Activated T-helper 1 cell treated with anti-CD3 and anti-CD28 coated beads, Interleukin-12 subunit alpha, Interleukin-12 subunit beta, Interleukin-2, Interleukin-4 antibody, amounts not matched to agents 30 ng/mL and 10 ng/mL and 1 ng/mL, durations not matched to agents 14 hours and 24 hours and 36 hours (primary cell): ENCODE measurements at regions of chr4 and their contacts with region 1.

Region 1: DNA sequence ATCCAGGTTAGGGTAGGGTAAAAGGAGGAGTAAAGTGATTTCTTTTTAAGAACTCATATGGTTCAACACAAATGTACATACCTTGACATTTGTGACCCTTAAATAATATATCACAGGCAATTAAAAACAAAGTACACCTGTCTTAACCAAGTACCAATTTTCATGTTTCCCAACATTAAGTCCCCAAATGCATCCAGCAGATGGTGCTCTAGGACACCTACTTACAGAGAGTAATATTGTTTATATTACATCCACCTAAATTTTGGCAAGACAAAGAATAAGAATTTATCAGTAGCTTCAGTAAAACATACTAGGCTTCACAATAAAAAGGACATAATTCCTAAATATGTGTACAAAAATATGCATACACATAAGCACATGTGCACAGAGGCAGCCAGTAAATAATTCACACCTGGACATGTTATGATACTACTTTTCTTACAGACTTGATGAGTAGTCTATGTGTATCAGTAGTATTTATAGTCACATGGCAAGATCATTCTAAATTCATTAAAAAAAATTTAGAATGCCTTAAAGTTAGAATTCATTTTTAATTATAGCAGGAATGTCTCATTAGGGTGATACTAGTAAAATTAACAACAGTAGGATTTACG is 219.7 kb downstream of the DCLK2 start:
- DNase-seq: no peak
- H3K4me3 Mint-ChIP-seq: no peak overlapping the region
- H3K27ac Mint-ChIP-seq: no peak overlapping the region
- H3K4me1 Mint-ChIP-seq: peaks cover 18% of the 10 kb centered on the region
- H3K27me3 Mint-ChIP-seq: no peaks in the 10 kb centered on the region

Region 2: DNA sequence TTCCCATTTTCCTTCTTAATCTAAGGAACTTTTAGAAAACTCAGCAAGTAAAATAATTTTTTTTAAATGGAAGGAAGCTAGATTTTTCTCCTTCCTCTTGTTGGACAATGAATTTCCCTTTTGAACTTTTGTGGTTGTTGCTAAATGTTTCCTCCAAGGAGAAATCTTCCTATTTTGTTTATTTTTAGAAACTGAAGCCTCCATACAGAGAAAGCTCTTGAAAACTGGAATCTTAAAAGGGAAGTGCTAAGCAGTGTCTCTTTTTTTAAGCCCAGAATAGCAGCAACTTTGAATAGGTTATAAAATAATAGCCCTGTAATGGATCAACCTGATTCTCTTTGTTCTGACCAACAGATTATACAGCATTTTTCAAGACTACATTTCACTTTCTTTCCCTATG is 234.8 kb before region 1 on chr4:
- intact Hi-C with region 1: no loop called
- DNase-seq: no peak
- H3K4me3 Mint-ChIP-seq: no peak overlapping the region
- H3K27ac Mint-ChIP-seq: no peak overlapping the region
- H3K4me1 Mint-ChIP-seq: no peaks in the 10 kb centered on the region
- H3K27me3 Mint-ChIP-seq: peaks cover 7% of the 10 kb centered on the region

Region 3: DNA sequence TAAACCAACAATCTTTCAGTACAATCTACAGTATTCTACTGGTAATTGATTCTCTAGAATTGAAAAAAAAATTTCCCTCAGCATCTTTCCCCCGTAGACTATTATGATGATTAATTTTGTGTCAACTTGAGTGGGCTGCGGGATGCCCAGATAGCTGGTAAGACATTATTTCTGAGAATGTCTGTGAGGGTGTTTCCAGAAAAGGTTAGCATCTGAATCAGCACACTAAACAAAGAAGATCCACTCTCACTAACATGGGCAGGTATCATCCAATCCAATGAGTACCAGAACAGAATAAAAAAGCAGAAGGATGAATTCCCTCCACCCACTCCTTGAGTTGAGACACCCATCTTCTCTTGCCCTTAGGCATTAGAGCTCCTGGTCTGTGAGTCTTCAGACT is 97.9 kb after region 1 on chr4:
- intact Hi-C with region 1: loop called (anchors 1 kb)
- DNase-seq: no peak
- H3K4me3 Mint-ChIP-seq: no peak overlapping the region
- H3K27ac Mint-ChIP-seq: peak overlapping the region; percentile 87
- H3K4me1 Mint-ChIP-seq: peaks cover 15% of the 10 kb centered on the region
- H3K27me3 Mint-ChIP-seq: no peaks in the 10 kb centered on the region

Region 4: GRCh38 chr4:150493851-150494250 is 195.9 kb after region 1 on chr4:
- intact Hi-C with region 1: loop called (anchors 5 kb)
- DNase-seq: no peak
- H3K4me3 Mint-ChIP-seq: no peak overlapping the region
- H3K27ac Mint-ChIP-seq: no peak overlapping the region
- H3K4me1 Mint-ChIP-seq: no peaks in the 10 kb centered on the region
- H3K27me3 Mint-ChIP-seq: no peaks in the 10 kb centered on the region

Region 5: DNA sequence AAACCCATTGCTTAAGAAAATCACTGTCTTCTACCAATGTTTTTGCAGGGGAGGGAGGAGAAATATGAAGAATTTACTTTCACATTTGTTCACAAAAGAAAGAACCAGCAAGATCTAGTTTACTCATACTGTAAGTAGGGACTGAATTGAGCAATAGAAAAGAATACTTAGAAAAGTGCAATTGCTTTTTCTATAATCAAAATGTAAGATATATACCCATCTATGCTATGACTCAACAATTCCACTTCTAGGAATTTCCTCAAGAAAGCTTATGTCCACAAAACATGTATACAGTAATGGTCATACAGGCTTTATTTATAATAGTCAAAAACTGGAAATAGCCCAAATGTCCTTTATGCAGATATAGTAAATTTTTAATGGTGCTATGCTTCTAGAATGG is 520.7 kb after region 1 on chr4:
- intact Hi-C with region 1: loop called (anchors 2 kb)
- DNase-seq: no peak
- H3K4me3 Mint-ChIP-seq: no peak overlapping the region
- H3K27ac Mint-ChIP-seq: no peak overlapping the region
- H3K4me1 Mint-ChIP-seq: peaks cover 18% of the 10 kb centered on the region
- H3K27me3 Mint-ChIP-seq: no peaks in the 10 kb centered on the region

Region 6: DNA sequence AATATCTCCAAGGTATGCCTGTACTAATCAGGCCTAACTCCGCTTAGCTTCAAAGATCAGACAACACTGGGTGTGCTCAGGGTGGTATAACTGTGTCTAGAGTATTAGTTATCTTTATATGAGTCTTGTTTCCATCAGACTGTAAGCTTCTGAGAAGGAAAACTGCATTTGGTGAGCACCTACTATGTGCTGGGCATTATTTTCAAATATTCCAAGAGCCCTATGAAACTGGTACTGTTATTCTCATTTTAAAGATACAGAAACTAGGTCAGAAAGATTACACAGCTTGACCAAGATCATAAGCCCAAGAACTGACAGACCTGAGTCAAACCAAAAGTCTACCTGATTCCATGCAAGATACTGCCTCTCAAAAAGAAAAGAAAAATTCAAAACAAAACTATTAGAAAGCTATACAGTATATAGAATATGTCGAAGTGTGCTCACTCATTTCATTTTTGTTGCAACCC is 672.8 kb after region 1 on chr4:
- intact Hi-C with region 1: loop called (anchors 5 kb)
- DNase-seq: no peak
- H3K4me3 Mint-ChIP-seq: no peak overlapping the region
- H3K27ac Mint-ChIP-seq: peak overlapping the region; percentile 1
- H3K4me1 Mint-ChIP-seq: peaks cover 45% of the 10 kb centered on the region
- H3K27me3 Mint-ChIP-seq: no peaks in the 10 kb centered on the region

Region 7: DNA sequence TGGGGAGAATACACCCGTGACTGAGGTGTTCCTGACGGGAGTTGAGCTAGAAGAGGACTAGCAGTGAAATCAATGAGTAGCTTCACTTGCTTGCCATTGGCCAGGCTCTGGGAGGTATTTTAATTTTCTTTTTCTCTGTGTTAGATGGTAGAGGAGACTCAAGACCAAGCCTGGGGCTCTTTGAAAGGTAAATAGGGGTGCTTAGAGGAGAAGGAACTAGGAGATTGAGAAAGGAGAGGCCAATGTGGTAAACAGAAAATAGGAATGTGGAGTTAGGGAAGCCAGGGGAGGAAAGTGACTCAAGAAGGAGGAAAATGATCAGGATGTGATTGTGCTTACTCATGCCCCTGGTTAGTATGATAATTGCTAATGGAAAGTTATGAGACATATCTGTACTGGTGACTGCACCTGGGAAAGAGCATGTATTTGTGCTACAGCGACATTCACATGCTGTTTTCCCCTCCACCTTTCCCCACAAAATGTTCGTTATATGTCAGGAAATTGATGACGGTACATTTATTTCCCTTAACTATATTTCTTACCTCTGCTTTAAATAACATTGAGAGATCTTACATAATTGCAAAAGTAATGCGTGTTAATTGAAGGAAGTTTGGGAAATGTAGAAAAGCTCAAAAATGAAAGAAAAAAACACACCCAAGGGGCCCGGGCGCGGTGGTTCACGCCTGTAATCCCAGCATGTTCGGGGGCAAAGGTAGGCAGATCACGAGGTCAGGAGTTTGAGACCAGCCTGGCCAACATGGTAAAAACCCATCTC is 734.0 kb after region 1 on chr4:
- intact Hi-C with region 1: loop called (anchors 5 kb)
- DNase-seq: no peak
- H3K4me3 Mint-ChIP-seq: peak overlapping the region; percentile 73
- H3K27ac Mint-ChIP-seq: peak overlapping the region; percentile 88
- H3K4me1 Mint-ChIP-seq: peaks cover 37% of the 10 kb centered on the region
- H3K27me3 Mint-ChIP-seq: no peaks in the 10 kb centered on the region